Activated CD4-positive, alpha-beta T cell treated with anti-CD3 and anti-CD28 coated beads, Interleukin-2, amount 10 ng/mL, durations not matched to agents 24 days and 14 days (primary cell): ENCODE measurements at regions of chr2 and their contacts with region 1.

Region 1: DNA sequence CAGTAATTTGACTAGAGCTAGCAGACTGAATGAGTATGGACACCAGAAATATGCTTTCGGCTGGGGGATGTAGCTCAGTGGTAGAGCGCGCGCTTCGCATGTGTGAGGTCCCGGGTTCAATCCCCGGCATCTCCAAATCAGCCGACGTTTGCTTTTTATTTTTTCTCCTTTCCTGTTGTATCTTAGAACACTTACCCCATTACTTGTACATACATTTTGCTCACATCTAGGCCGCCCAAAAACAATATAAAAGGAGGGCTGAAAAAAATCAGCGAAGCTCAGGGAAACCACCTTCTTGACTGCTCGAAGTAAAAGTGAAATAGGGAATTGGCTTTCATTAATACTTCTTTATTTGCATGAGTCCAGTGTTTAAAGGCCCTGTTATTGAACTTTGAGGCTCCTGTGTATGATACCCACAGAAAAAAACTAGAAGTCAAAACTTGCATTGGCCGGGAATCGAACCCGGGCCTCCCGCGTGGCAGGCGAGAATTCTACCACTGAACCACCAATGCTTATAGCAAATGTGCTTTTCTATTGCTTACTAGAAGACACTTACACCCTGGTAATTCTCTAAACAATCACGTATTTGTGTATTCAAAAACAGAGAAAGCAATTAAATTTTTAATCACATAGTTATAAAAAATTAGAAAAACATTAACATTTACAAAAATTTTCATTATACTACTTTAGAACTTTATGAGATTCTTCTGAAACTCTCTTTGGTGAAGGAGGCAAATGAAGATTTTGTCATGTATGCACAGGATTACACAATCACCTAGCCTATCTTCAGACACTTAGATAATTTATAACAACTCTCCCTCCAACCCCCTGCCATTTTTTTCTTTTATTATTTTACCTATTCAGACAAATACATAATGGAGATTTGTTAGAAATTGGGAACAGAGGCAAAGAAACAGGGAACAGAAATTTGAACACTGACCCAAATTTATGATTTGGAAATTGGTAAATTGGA is 35.2 kb upstream of the GPD2 start:
- DNase-seq: peak; percentile 94
- H3K4me3 Mint-ChIP-seq: peak overlapping the region; percentile 92
- H3K27ac Mint-ChIP-seq: peak overlapping the region; percentile 96
- H3K4me1 Mint-ChIP-seq: peaks cover 36% of the 10 kb centered on the region
- H3K27me3 Mint-ChIP-seq: peaks cover 5% of the 10 kb centered on the region

Region 2: DNA sequence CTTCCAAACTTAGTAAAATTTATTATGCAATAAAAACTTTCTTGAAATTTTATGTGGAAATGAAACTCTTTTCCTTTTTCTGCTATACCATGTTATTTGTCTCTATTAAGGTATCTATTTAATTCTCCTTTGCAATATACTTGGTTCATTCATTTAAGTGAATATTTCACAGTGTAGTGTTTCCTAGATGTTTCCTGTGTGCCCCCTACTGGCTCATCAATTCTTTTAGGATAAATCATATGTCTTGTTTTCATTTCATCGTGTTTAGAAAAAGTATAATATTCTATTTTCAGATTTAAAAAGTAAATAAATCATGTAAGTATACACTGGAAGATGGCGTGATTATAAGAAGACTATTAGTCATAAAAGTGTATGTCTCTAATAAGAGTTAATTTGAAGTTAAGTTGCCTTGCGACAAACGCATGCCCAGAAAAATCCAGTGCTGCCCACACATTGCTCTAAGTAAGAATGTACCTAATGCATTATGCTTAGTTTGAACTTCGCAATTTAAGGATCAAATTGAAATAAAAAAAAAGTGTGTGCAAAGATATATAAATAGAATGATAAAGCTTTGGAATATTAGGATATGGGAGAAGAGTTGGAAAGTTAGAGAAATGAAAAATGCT is 1177.1 kb before region 1 on chr2:
- intact Hi-C with region 1: no loop called
- DNase-seq: no peak
- H3K4me3 Mint-ChIP-seq: no peak overlapping the region
- H3K27ac Mint-ChIP-seq: no peak overlapping the region
- H3K4me1 Mint-ChIP-seq: no peaks in the 10 kb centered on the region
- H3K27me3 Mint-ChIP-seq: no peaks in the 10 kb centered on the region

Region 3: GRCh38 chr2:156332534-156333273 is 68.3 kb before region 1 on chr2 and contains the start of gene NR4A2:
- intact Hi-C with region 1: loop called (anchors 1 kb)
- DNase-seq: peak; percentile 96
- H3K4me3 Mint-ChIP-seq: peak within 1 kb of the TSS; percentile 81
- H3K27ac Mint-ChIP-seq: peak within 1 kb of the TSS; percentile 99
- H3K4me1 Mint-ChIP-seq: peaks cover 50% of the 10 kb centered on the region
- H3K27me3 Mint-ChIP-seq: peaks cover 7% of the 10 kb centered on the region
- total RNA-seq, gene NR4A2: 13.2 and 14.1 TPM in 2 replicates

Region 4: GRCh38 chr2:156380117-156380645 is 20.8 kb before region 1 on chr2:
- intact Hi-C with region 1: loop called (anchors 1 kb)
- DNase-seq: no peak
- H3K4me3 Mint-ChIP-seq: no peak overlapping the region
- H3K27ac Mint-ChIP-seq: peak overlapping the region; percentile 56
- H3K4me1 Mint-ChIP-seq: peaks cover 29% of the 10 kb centered on the region
- H3K27me3 Mint-ChIP-seq: no peaks in the 10 kb centered on the region

Region 5: GRCh38 chr2:156411835-156412234 is 10.8 kb after region 1 on chr2:
- intact Hi-C with region 1: no loop called
- DNase-seq: no peak
- H3K4me3 Mint-ChIP-seq: no peak overlapping the region
- H3K27ac Mint-ChIP-seq: no peak overlapping the region
- H3K4me1 Mint-ChIP-seq: no peaks in the 10 kb centered on the region
- H3K27me3 Mint-ChIP-seq: peaks cover 19% of the 10 kb centered on the region

Region 6: DNA sequence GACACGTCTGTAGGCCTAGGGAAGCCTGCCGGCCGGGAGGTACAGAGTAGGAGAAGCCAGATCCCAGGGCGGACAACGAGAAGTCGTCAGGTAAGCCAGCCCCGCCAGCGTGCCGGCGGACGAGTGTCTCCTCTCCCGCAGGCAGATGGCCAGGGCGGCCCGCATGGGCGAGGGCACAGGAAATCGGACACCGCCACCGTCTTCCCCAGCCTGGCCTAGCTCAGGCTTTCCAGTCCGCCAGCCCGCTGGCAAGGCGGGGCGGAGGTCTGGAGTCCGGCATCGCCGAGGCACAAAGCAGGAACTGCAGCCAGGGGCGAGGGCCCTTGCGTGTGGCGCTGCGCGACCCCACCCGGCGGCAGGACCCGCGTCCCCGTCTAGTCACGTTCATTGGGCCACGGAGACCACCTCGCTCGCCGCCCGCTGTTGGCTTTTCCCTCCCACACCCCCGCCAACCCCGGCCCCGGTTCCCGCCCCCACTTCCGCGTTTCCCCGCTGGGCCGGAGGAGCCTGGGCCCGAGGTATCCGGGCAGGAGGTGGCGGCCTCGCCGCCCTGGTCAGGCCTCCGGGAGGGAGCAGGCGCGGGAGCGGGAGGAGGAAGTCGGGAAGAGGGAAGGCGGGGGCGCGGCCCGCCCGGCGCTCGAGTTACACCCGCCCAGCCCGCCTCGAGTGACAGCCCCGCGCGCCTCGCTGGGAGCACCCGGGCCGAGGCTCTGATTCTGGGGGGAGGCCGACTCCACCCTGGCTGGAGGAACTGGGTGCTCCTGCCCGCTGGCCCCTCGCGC is 34.9 kb after region 1 on chr2 and contains the start of gene GPD2:
- intact Hi-C with region 1: loop called (anchors 1 kb)
- DNase-seq: peak; percentile 89
- H3K4me3 Mint-ChIP-seq: peak within 1 kb of the TSS; percentile 93
- H3K27ac Mint-ChIP-seq: peak within 1 kb of the TSS; percentile 98
- H3K4me1 Mint-ChIP-seq: peaks cover 37% of the 10 kb centered on the region
- H3K27me3 Mint-ChIP-seq: no peaks in the 10 kb centered on the region
- total RNA-seq, gene GPD2: 18.0 and 19.7 TPM in 2 replicates

Region 7: DNA sequence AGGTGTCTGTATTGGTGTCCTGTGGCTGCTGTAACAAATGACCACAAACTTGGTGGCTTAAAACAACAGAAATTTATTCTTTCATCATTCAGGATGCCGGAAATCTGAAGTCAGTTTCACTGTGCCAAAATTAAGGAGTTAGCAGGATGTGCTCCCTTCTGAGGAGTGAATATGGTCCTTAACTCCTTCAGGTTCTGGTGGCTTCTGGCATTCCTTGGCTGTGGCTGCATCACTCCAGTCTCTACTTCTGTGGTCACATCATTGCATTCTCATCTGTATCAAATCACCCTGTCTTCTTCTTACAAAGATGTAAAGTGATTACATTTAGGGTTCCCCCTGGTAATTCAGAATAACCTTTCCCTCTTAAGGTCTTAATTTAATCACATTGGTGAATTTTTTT is 47.8 kb after region 1 on chr2:
- intact Hi-C with region 1: no loop called
- DNase-seq: no peak
- H3K4me3 Mint-ChIP-seq: no peak overlapping the region
- H3K27ac Mint-ChIP-seq: no peak overlapping the region
- H3K4me1 Mint-ChIP-seq: peaks cover 9% of the 10 kb centered on the region
- H3K27me3 Mint-ChIP-seq: no peaks in the 10 kb centered on the region

Region 8: DNA sequence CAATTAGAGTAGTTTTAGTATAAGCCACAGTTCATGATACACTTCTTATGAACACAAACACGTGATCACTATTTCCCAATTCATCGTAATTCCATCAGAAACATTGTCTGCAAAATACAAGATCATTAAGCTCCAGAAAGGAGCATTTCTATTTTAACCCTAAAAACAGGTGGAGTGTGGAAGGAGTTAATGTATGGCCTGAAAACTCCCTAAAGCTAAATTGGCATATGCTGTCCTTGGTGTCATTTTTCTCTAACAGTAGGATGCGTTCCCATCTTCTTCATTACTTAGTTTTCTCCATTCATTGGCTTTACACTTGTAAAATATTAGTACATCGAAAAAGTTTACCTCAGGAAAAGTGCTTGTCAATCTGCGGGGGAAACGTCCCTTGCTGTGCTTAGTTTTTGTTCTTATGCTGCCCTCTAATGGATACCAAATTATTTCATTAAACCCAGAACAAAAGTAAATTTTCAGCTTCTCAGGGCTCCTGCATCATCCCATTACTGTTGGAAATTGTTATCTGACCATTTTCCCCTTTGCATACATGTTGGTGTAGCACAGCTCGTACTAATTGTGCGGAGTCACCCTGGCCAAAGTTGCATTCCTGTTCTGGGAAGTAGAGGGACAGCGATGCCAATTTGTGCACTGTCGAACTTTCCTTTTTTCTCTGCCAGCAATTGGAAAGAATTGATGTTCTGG is 188.5 kb after region 1 on chr2:
- intact Hi-C with region 1: loop called (anchors 1 kb)
- DNase-seq: peak; percentile 64
- H3K4me3 Mint-ChIP-seq: no peak overlapping the region
- H3K27ac Mint-ChIP-seq: no peak overlapping the region
- H3K4me1 Mint-ChIP-seq: peaks cover 8% of the 10 kb centered on the region
- H3K27me3 Mint-ChIP-seq: no peaks in the 10 kb centered on the region

Region 9: GRCh38 chr2:157468931-157469708 is 1068.1 kb after region 1 on chr2:
- intact Hi-C with region 1: loop called (anchors 10 kb)
- DNase-seq: peak; percentile 82
- H3K4me3 Mint-ChIP-seq: peak overlapping the region; percentile 78
- H3K27ac Mint-ChIP-seq: peak overlapping the region; percentile 97
- H3K4me1 Mint-ChIP-seq: peaks cover 82% of the 10 kb centered on the region
- H3K27me3 Mint-ChIP-seq: no peaks in the 10 kb centered on the region